ENCODE measurements at regions of chr1 and their contacts with region 1.

Region 1: DNA sequence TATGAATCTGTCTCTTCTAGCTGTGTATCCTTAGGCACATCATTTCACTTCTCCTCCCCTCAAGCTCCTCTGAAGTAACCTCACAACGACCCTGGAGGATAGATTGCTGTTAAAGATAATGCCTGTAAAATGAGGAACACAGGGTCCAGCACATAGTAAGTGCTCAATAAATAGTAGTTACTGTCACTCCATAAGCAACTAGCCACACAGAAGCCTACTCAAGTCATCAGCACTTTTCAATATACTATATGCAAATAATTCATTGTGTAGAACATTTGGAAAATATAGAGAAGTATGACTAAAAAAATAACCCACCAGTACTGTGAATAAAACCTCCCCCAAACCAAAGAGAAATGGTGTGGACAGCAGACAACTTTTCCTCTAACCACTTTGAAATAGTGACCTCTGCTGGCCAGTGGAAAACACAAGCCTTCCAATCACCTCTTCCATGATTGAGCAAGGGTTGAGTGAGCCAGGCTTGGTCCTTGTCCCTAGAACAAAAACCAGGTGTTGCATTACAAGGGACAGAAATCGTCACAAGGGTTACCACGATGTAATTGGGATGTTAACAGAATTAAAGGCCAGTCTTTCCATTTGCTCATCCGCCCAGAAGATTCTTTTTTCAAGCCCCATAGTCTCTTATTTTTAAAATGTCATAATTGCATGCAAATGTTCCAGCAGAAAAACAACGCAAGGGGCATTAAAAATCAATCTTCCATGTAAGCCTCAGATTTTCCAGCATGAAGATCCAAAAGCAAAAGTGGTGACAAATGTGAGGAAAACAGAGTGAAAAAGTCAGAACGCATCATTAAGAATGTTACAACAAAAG is 15.7 kb upstream of the GLIS1 start:
- DNase-seq: peak; percentile 55
- ATAC-seq: peak; percentile 79
- H3K4me3 ChIP-seq: no peak overlapping the region
- H3K27ac ChIP-seq: no peak overlapping the region
- H3K4me1 ChIP-seq: no peaks in the 10 kb centered on the region
- H3K27me3 ChIP-seq: no peaks in the 10 kb centered on the region
- CTCF ChIP-seq: peak; percentile 79
- EP300 ChIP-seq: no peak
- POLR2A ChIP-seq: no peak
- RAD21 ChIP-seq: peak; percentile 54; the same call in 1 of the 2 replicates

Region 2: DNA sequence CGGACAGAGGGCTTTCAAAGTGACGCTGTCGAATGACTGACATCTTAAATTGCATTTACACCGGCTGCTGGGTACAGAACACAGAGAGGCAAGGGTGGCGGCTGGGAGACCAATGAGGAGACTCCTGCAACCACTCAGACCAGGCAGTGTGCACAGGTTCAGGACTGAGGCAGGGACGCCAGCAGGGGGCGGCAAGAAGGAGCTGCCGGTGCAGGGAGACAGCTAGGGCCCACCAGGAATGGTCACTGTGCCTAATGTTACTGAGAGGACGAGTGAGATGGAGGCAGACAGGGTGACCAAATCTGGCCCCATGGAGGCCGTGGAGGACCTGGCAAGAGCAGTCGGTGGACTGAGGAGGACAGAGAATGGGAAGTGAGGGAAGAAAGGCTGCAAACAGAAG is 39.2 kb before region 1 on chr1:
- CTCF ChIA-PET with region 1: interaction called, 24 read pairs
- POLR2A ChIA-PET with region 1: no interaction called
- in situ Hi-C with region 1: no loop called
- intact Hi-C with region 1: loop called (anchors 1 kb)
- DNase-seq: peak; percentile 29
- ATAC-seq: peak; percentile 98
- H3K4me3 ChIP-seq: no peak overlapping the region
- H3K27ac ChIP-seq: no peak overlapping the region
- H3K4me1 ChIP-seq: peaks cover 5% of the 10 kb centered on the region; the same call in 1 of the 2 replicates
- H3K27me3 ChIP-seq: peaks cover 0 to 27% of the 10 kb centered on the region in 2 experiments; a peak in 3 of 5 replicates
- CTCF ChIP-seq: peak; percentile 82
- EP300 ChIP-seq: no peak
- POLR2A ChIP-seq: no peak
- RAD21 ChIP-seq: 0 out of 2 replicates have a peak, but pooled peaks have one; percentile 31